AG04450 (cell line): ENCODE measurements at regions of chr15 and their contacts with region 1.

Region 1: DNA sequence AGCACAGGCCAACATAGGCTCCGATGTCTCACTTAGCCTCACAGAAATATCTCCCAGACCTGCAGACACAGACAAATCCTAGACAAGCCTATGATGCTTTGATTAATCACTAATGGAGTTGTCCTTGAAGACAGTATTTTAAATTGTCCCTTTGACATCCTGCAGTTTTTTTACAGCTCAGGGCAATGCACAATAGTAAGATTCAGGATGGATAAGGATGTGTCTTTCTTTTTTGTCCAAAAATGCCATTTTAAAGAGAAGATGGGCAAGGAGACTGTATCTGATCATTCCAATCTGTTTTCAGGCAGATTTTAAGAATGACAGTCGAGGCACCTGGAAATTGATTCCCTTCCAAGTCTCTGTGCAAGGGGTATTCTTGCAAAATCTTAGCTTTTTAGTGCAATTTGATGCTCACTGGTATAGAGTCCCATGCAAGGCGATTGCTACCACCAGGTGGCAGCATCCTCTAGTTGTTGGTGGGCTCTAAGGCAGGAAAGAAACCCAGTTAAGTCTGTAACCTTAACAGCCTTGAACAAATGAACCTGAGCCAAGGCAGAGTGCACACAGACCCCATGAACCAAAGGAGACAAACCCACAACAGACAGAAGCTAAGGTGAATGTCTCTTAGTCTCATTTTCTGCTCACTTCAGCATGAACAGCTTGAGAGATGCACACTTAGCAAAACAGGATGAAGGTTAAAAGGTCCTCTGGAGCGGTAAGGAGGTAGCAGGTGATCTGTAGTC is 51.2 kb upstream of the MINAR1 start:
- DNase-seq: peak; percentile 45
- H3K4me3 ChIP-seq: no peak overlapping the region
- H3K27ac ChIP-seq: no peak overlapping the region
- H3K27me3 ChIP-seq: no peaks in the 10 kb centered on the region
- CTCF ChIP-seq: peak; percentile 98

Region 2: GRCh38 chr15:79339564-79340314 is 41.2 kb before region 1 on chr15:
- CTCF ChIA-PET with region 1: interaction called, 32 read pairs
- POLR2A ChIA-PET with region 1: no interaction called
- DNase-seq: peak; percentile 10
- H3K4me3 ChIP-seq: no peak overlapping the region
- H3K27ac ChIP-seq: no peak overlapping the region
- H3K27me3 ChIP-seq: no peaks in the 10 kb centered on the region
- CTCF ChIP-seq: peak; percentile 98

Region 3: DNA sequence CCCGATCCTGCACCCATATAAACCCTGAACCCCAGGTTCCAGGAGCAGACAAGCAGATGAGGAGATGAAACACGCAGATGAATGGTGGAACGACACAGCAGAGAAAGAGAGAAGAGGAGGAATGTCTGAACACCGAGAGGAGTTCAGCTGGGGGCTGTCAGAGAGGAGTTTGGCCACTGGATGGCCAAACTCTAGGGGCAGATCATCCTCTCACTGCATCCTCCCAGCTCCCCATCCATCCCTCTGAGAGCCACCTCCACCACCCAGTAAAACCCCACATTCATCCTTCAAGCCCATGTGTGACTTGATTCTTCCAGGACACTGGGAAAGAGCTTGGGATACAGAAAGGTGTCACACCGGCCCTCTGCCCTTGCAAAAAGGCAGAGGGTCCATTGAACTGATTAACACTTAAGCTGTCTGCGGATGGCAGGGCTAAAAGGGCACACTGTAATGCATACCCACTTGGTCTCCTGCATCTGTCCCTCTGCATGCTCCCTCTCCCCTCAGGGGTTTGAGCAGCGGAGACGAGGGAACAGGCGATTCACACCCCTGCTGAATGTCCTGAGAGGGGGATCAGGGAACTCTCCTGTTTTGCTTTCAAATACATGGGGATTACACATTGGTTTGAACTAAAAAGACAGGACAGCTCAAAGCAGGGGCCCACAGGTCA is 16.2 kb before region 1 on chr15:
- CTCF ChIA-PET with region 1: interaction called, 46 read pairs
- POLR2A ChIA-PET with region 1: no interaction called
- DNase-seq: no peak
- H3K4me3 ChIP-seq: no peak overlapping the region
- H3K27ac ChIP-seq: no peak overlapping the region
- H3K27me3 ChIP-seq: no peaks in the 10 kb centered on the region
- CTCF ChIP-seq: no peak

Region 4: GRCh38 chr15:79394231-79394630 is 13.3 kb after region 1 on chr15:
- CTCF ChIA-PET with region 1: interaction called, 62 read pairs
- POLR2A ChIA-PET with region 1: no interaction called
- DNase-seq: peak; percentile 8
- H3K4me3 ChIP-seq: no peak overlapping the region
- H3K27ac ChIP-seq: no peak overlapping the region
- H3K27me3 ChIP-seq: no peaks in the 10 kb centered on the region
- CTCF ChIP-seq: no peak

Region 5: GRCh38 chr15:79431636-79432344 is 50.9 kb after region 1 on chr15 and contains the start of gene MINAR1:
- CTCF ChIA-PET with region 1: interaction called, 42 read pairs
- POLR2A ChIA-PET with region 1: no interaction called
- DNase-seq: no peak
- H3K4me3 ChIP-seq: peak within 1 kb of the TSS; percentile 62
- H3K27ac ChIP-seq: no peak within 1 kb of the TSS
- H3K27me3 ChIP-seq: peaks cover 36% of the 10 kb centered on the region
- CTCF ChIP-seq: 0 out of 2 replicates have a peak, but pooled peaks have one; percentile 18
- polyA plus RNA-seq, gene MINAR1: 0.76 and 1.0 TPM in 2 replicates

Region 6: GRCh38 chr15:79743031-79743430 is 362.1 kb after region 1 on chr15:
- CTCF ChIA-PET with region 1: no interaction called
- POLR2A ChIA-PET with region 1: no interaction called
- DNase-seq: no peak
- H3K4me3 ChIP-seq: no peak overlapping the region
- H3K27ac ChIP-seq: no peak overlapping the region
- H3K27me3 ChIP-seq: no peaks in the 10 kb centered on the region
- CTCF ChIP-seq: no peak

Region 7: GRCh38 chr15:79853458-79854328 is 472.8 kb after region 1 on chr15:
- CTCF ChIA-PET with region 1: interaction called, 388 read pairs
- POLR2A ChIA-PET with region 1: interaction called, 6 read pairs
- DNase-seq: peak; percentile 81
- H3K4me3 ChIP-seq: no peak overlapping the region
- H3K27ac ChIP-seq: no peak overlapping the region
- H3K27me3 ChIP-seq: no peaks in the 10 kb centered on the region
- CTCF ChIP-seq: peak; percentile 99

Region 8: DNA sequence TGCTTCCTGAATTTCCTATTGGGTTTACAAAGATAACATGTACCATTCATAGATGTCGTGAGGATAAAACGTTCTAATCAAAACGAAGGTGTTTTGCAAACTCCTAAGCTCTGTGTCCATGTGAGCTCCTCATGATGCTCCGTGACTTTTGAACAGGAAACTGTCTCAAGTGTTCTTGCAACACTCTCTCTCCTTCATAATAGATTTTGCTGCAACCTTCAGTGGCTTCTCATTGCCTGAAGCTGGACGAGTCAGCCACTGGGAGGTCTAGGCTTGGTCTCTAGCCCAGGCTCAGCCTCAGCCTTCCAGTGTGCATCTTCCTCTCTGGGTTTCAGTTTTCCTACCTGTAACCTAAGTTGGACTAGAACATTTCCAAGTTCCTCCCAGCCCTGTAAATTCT is 608.8 kb after region 1 on chr15:
- CTCF ChIA-PET with region 1: interaction called, 20 read pairs
- POLR2A ChIA-PET with region 1: no interaction called
- DNase-seq: no peak
- H3K4me3 ChIP-seq: no peak overlapping the region
- H3K27ac ChIP-seq: no peak overlapping the region
- H3K27me3 ChIP-seq: no peaks in the 10 kb centered on the region
- CTCF ChIP-seq: no peak